ENCODE measurements at regions of chr4 and their contacts with region 1.

Region 1: GRCh38 chr4:101328063-101328602 is 19.2 kb downstream of the PPP3CA start:
- DNase-seq: peak; percentile 64
- ATAC-seq: peak; percentile 95
- H3K4me3 ChIP-seq: peak overlapping the region; percentile 40
- H3K27ac ChIP-seq: peak overlapping the region; percentile 54; the same call in 1 of the 2 replicates
- H3K4me1 ChIP-seq: peaks cover 13% of the 10 kb centered on the region
- H3K27me3 ChIP-seq: no peaks in the 10 kb centered on the region
- CTCF ChIP-seq: no peak
- EP300 ChIP-seq: 0 out of 4 replicates have a peak, but pooled peaks of 1 of the 2 experiments have one; percentile 45
- POLR2A ChIP-seq: no peak
- RAD21 ChIP-seq: no peak

Region 2: GRCh38 chr4:101259876-101260275 is 68.3 kb before region 1 on chr4:
- CTCF ChIA-PET with region 1: no interaction called
- POLR2A ChIA-PET with region 1: no interaction called
- RAD21 ChIA-PET with region 1: no interaction called
- SMC1A ChIA-PET with region 1: no interaction called
- in situ Hi-C with region 1: no loop called
- intact Hi-C with region 1: no loop called
- DNase-seq: peak; percentile 32
- ATAC-seq: peak; percentile 60
- H3K4me3 ChIP-seq: no peak overlapping the region
- H3K27ac ChIP-seq: no peak overlapping the region
- H3K4me1 ChIP-seq: peaks cover 22% of the 10 kb centered on the region
- H3K27me3 ChIP-seq: peaks cover 0 to 3% of the 10 kb centered on the region in 2 experiments; a peak in 1 of 4 replicates
- CTCF ChIP-seq: no peak
- EP300 ChIP-seq: no peak
- POLR2A ChIP-seq: no peak
- RAD21 ChIP-seq: no peak

Region 3: DNA sequence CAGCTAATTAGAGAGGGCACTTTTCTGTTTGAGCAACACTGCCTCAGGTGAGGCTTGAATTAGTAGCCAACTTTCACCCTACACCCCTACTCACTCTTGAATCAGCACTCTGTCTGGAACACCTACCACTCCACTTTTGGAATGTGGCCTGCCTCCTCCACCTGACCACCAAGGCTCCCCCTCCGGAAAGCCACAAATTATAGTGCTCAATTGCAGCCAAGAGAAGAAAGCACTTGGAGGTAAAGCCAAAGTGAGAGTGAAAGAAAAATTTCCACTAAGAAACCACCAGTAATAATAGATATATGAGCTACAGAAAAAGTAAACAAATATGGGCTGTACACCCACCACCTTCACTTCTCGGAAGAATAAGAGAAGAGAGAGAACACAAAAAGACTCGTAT is 21.9 kb before region 1 on chr4:
- CTCF ChIA-PET with region 1: interaction called, 4 read pairs
- POLR2A ChIA-PET with region 1: interaction called, 3 read pairs
- RAD21 ChIA-PET with region 1: interaction called, 7 read pairs
- SMC1A ChIA-PET with region 1: interaction called, 16 read pairs
- in situ Hi-C with region 1: no loop called
- intact Hi-C with region 1: no loop called
- DNase-seq: no peak
- ATAC-seq: peak; percentile 73
- H3K4me3 ChIP-seq: peak overlapping the region; percentile 46; the same call in 1 of the 2 replicates
- H3K27ac ChIP-seq: peak overlapping the region; percentile 5; the same call in 1 of the 2 replicates
- H3K4me1 ChIP-seq: peaks cover 22% of the 10 kb centered on the region
- H3K27me3 ChIP-seq: no peaks in the 10 kb centered on the region
- CTCF ChIP-seq: no peak
- EP300 ChIP-seq: no peak
- POLR2A ChIP-seq: no peak
- RAD21 ChIP-seq: no peak

Region 4: GRCh38 chr4:101347557-101348366 is 19.6 kb after region 1 on chr4:
- CTCF ChIA-PET with region 1: interaction called, 3 read pairs
- POLR2A ChIA-PET with region 1: interaction called, 3 read pairs
- RAD21 ChIA-PET with region 1: interaction called, 7 read pairs
- SMC1A ChIA-PET with region 1: interaction called, 13 read pairs
- in situ Hi-C with region 1: no loop called
- intact Hi-C with region 1: loop called (anchors 2 kb)
- DNase-seq: peak; percentile 83
- ATAC-seq: peak; percentile 91
- H3K4me3 ChIP-seq: peak overlapping the region; percentile 90
- H3K27ac ChIP-seq: peak overlapping the region; percentile 47
- H3K4me1 ChIP-seq: peaks cover 10% of the 10 kb centered on the region
- H3K27me3 ChIP-seq: peaks cover 1 to 4% of the 10 kb centered on the region in 2 experiments; a peak in 1 of 4 replicates
- CTCF ChIP-seq: no peak
- EP300 ChIP-seq: no peak
- POLR2A ChIP-seq: peak; percentile 80
- RAD21 ChIP-seq: no peak

Region 5: DNA sequence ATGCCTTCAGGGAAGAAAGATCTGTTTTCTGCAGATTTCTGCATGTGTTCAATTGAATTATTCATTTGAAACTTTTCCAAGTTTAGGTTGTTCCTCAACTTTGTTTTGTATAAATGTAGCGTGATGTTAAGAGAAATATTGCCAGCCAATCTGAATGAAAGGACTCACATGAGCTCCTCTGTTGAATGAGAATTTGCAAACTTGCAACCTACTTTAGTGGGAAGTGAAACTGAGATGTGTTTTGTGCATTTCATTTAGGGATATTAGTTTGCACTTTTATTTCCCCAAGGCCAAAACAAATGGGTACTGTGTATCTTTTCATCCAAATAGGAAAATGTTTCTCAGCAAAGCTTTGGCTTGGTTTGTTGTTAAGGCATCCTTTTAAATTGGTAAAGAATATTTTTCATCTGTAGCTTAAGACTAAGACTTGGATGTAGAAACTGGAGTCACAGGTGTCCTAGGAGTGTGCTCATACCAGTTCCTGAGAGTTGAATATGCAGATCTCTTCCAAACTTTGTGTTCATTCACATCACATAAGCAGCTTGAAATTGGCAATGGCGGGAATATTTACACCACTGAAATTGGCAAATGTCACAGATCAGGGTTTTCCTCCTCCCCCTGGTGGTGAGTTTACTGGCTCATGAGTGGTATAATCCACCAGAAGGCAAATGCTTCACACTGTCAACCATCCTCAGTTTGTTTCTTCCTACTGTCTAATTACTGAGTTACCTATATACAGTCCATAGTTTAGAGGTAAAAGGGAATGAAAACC is 268.8 kb after region 1 on chr4:
- CTCF ChIA-PET with region 1: interaction called, 5 read pairs
- POLR2A ChIA-PET with region 1: no interaction called
- RAD21 ChIA-PET with region 1: interaction called, 3 read pairs
- SMC1A ChIA-PET with region 1: interaction called, 11 read pairs
- in situ Hi-C with region 1: no loop called
- intact Hi-C with region 1: no loop called
- DNase-seq: peak; percentile 5
- ATAC-seq: peak; percentile 67
- H3K4me3 ChIP-seq: no peak overlapping the region
- H3K27ac ChIP-seq: no peak overlapping the region
- H3K4me1 ChIP-seq: no peaks in the 10 kb centered on the region
- H3K27me3 ChIP-seq: no peaks in the 10 kb centered on the region
- CTCF ChIP-seq: peak; percentile 41 to 43 (median 43); a peak in 5 of 6 replicates
- EP300 ChIP-seq: no peak
- POLR2A ChIP-seq: no peak
- RAD21 ChIP-seq: peak; percentile 30

Region 6: DNA sequence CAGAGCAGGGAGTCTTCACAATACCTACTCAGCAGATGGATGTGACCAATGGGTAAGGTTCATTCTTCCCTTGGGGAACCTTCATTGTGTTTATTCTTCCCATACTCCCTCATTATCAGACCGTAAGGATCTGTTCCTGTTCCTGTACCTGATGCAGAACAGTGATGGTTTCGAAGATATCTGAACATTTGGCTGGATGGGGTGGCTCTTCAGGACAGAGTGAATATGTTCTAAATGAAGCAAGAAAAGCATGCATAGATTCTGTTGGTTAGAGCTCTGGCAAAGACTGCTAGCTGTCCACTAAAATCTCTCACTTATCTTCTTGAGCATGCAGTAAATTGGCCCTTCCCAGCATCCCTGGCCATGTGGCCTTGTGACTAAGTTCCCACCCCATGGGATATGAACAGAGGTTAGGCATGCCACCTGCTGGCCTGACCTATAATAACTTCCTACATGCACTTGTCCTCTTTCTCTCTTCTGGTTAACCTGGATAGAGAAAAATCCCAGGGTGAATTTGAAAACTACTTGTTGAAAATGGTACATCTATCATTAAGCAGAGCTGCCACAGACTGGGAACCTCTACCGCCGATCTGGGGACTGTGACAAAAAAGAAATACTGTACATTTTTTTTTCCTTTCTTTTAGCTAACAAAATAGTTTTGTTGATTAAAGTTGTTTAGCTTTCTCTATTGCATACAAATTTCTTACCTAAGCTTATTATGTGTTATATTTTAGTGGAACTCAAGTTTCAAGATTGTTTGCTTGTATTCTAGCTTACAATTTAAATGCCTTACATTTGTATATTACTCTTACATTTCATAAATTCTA is 402.4 kb after region 1 on chr4:
- CTCF ChIA-PET with region 1: interaction called, 13 read pairs
- POLR2A ChIA-PET with region 1: no interaction called
- RAD21 ChIA-PET with region 1: interaction called, 3 read pairs
- SMC1A ChIA-PET with region 1: interaction called, 3 read pairs
- in situ Hi-C with region 1: no loop called
- intact Hi-C with region 1: no loop called
- DNase-seq: peak; percentile 8
- ATAC-seq: peak; percentile 95
- H3K4me3 ChIP-seq: no peak overlapping the region
- H3K27ac ChIP-seq: no peak overlapping the region
- H3K4me1 ChIP-seq: no peaks in the 10 kb centered on the region
- H3K27me3 ChIP-seq: no peaks in the 10 kb centered on the region
- CTCF ChIP-seq: peak; percentile 55 to 72 (median 62); a peak in 5 of 6 replicates
- EP300 ChIP-seq: no peak
- POLR2A ChIP-seq: no peak
- RAD21 ChIP-seq: peak; percentile 84

Measured in GM12878 (cell line).